HepG2 (cell line): ENCODE measurements at regions of chr2 and their contacts with region 1.

Region 1: GRCh38 chr2:231463698-231464575 is at the start of gene NCL:
- DNase-seq: peak; percentile 96
- ATAC-seq: peak; percentile 94
- H3K4me3 ChIP-seq: peak within 1 kb of the TSS; percentile 80 to 100 (median 87)
- H3K27ac ChIP-seq: peak within 1 kb of the TSS; percentile 99
- H3K4me1 ChIP-seq: peaks cover 61% of the 10 kb centered on the region
- H3K27me3 ChIP-seq: peaks cover 0 to 2% of the 10 kb centered on the region in 2 experiments; a peak in 3 of 5 replicates
- CTCF ChIP-seq: peak; percentile 35; the same call in 1 of the 2 replicates
- EP300 ChIP-seq: peak; percentile 18 to 53; a peak in 2 of 4 replicates
- POLR2A ChIP-seq: peak; percentile 100
- RAD21 ChIP-seq: peak; percentile 65
- total RNA-seq, gene NCL: 779 and 1,144 TPM in 2 replicates

Region 2: DNA sequence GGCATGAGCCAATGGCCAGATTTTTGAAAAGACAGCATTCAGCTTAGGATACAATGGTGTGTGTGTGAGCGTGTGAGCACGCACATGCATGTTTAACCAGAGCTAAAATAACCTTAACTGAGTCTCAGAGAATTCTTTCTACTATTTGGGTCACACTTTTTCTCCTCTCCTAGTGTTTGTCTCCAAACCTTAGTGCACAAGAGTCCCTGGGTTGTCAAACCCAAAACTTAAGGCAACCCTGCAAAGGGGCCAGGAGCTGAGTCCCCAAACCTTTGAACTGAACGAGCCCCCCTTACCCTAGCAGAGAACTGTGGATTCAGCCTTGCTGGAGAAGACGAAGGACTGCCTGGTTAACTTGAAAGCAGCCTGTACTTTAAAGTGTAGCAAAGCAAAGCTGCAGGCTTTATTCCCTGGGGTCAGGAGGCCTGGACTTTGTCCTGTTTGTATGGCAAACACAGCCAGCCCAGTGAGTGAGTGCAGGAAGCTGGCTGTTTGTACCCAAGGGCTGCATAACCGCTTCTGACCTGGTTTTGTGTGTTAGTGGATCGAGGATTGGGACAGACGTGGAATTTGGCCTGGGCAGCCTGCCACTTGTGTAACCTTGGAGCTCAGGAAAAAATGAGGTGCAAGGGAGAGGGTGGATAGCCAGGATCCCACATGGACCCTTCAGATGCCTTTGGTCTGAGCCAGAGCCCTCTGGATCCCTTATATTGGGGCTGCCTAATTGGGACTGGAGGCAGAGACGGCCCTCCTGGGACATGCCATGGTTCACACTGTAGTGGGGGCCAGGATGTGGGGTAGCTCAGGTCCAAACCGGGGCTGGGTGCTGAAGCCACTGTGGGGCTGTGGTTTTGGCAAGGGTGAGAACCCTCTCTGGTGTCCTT is 413.7 kb before region 1 on chr2:
- CTCF ChIA-PET with region 1: no interaction called
- POLR2A ChIA-PET with region 1: interaction called, 14 read pairs
- in situ Hi-C with region 1: no loop called
- intact Hi-C with region 1: loop called (anchors 5 kb)
- DNase-seq: peak; percentile 100
- ATAC-seq: peak; percentile 76
- H3K4me3 ChIP-seq: peak overlapping the region; percentile 40 to 82 (median 57)
- H3K27ac ChIP-seq: peak overlapping the region; percentile 97
- H3K4me1 ChIP-seq: peaks cover 82% of the 10 kb centered on the region
- H3K27me3 ChIP-seq: no peaks in the 10 kb centered on the region; a peak in 1 of 5 replicates
- CTCF ChIP-seq: peak; percentile 53
- EP300 ChIP-seq: peak; percentile 89 to 99
- POLR2A ChIP-seq: peak in 1 of 2 experiments; percentile 99; a peak in 2 of 4 replicates
- RAD21 ChIP-seq: peak; percentile 31; the same call in 1 of the 2 replicates

Region 3: DNA sequence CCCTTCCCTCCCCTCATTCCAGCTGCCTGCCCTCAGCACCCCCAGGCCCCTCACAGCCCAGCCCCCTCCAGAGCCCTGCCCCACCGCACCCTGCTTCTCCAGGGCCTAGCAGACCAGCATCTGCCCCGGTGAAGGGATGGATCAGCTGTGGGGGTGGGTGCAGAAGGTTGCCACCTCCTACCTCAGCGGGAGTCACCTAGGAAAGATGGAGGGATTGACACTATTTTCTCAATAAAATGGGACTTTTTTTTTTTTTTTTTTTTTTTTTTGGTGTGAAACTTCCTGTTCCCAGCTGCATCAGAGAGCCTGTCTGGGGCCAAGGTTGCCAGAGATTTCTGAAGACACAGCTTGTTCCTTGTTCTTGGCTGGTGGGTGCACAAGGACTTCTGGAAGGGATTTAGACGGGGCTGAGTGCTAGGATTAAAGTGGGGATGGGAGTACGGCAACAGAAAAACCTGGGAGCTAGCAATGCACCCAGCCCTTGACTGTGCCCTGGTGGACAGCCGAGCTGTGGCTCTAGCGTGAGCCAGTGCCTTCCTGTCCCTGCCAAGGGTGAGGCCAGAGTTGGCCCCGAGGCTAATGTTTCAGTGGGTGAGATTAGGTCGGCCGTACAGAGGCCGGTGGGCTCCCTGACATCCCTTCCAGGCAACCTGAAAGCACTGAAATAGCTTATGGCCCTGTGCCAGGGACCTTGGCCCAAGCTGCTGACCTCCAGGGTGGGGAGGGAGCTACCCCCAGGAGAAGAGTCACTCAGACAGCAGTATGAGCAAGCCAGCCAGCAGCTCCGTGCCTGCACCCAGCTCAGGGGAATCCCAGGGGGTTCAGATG is 63.9 kb before region 1 on chr2:
- CTCF ChIA-PET with region 1: no interaction called
- POLR2A ChIA-PET with region 1: interaction called, 11 read pairs
- in situ Hi-C with region 1: no loop called
- intact Hi-C with region 1: no loop called
- DNase-seq: peak; percentile 41
- ATAC-seq: peak; percentile 89
- H3K4me3 ChIP-seq: peak overlapping the region; percentile 7 to 62 (median 29); a peak in 5 of 6 replicates
- H3K27ac ChIP-seq: no peak overlapping the region
- H3K4me1 ChIP-seq: peaks cover 16% of the 10 kb centered on the region
- H3K27me3 ChIP-seq: peaks cover 4 to 74% of the 10 kb centered on the region in 2 experiments
- CTCF ChIP-seq: no peak
- EP300 ChIP-seq: no peak
- POLR2A ChIP-seq: no peak
- RAD21 ChIP-seq: no peak

Region 4: DNA sequence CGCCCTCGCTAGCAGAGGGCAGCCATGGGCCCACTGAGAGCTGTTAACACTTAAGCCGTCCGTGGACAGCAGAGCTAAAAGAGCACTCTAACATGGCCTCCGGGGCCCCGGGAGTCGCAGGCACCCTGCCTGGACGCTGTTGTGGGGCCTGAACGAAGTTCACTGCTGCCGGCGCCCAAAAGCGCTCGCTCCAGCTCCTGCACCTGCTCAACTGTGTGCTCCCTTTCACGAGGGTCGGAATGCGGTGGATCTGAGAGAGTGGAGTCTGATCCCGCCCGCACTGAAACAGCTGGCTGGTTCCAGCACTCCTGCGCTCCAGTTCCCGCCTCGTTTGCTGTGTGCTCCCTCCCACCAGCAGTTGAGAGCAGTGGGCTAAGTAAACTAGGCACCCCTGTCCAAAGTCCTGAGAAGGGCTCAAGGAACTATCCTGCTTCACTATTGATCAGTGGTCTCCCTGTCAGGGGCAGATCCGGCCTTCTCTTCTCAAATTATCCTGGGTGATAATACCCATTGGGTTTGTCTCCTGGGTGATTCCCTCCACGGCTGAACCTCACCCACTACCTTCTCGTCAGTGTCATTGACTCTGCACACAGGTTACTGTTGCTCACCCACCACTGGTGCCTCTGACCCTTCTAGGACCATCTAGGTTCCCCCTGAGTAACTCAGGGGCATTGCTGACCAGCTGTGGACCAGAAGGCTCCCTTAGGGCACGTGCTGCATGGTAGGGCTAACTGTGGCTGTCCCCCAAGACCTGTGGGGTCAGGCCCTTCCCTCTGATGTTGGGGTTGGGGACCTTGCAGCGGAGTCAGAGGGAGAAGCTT is 44.9 kb before region 1 on chr2:
- CTCF ChIA-PET with region 1: no interaction called
- POLR2A ChIA-PET with region 1: interaction called, 21 read pairs
- in situ Hi-C with region 1: no loop called
- intact Hi-C with region 1: no loop called
- DNase-seq: peak; percentile 39
- ATAC-seq: peak; percentile 83
- H3K4me3 ChIP-seq: peak overlapping the region; percentile 17 to 56 (median 21); a peak in 5 of 6 replicates
- H3K27ac ChIP-seq: peak overlapping the region; percentile 2
- H3K4me1 ChIP-seq: peaks cover 41% of the 10 kb centered on the region
- H3K27me3 ChIP-seq: no peaks in the 10 kb centered on the region; a peak in 2 of 5 replicates
- CTCF ChIP-seq: 0 out of 2 replicates have a peak, but pooled peaks have one; percentile 9
- EP300 ChIP-seq: no peak
- POLR2A ChIP-seq: no peak
- RAD21 ChIP-seq: no peak

Region 5: DNA sequence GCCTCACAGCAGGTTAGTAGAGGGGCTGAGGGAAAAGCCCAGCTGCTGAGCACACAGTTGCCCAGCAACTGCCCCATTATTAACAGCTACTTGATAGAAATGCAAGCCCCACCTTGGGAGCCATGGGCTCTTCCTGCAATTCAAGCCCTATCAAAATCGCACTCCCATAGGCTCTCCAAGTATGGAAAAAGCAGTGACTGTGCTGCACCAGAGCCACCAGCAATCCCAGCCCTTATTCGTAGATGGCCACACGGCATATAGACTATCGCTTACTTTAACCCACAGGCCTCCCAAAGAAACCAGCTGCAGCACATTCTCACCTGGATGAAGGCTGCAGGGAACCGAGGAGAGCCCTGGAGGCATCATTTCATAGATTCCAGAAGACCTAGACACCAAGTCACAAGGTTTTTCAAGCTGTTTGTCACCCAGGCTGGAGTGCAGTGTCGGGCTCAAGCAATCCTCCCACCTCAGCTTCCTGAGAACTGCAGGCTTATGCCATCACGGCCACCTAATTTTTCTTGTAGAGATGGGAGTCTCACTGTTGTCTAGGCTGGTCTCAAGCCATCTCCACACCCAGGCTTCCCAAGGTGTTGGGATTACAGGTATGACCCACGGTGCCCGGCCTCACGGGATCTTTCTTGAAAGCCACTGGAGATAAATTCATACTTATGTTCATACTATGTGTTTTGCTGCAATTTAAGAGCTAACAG is 11.0 kb before region 1 on chr2:
- CTCF ChIA-PET with region 1: no interaction called
- POLR2A ChIA-PET with region 1: interaction called, 155 read pairs
- in situ Hi-C with region 1: no loop called
- intact Hi-C with region 1: no loop called
- DNase-seq: peak; percentile 23
- ATAC-seq: peak; percentile 7
- H3K4me3 ChIP-seq: no peak overlapping the region
- H3K27ac ChIP-seq: peak overlapping the region; percentile 11
- H3K4me1 ChIP-seq: peaks cover 10% of the 10 kb centered on the region
- H3K27me3 ChIP-seq: no peaks in the 10 kb centered on the region
- CTCF ChIP-seq: no peak
- EP300 ChIP-seq: no peak; a peak in 1 of 4 replicates
- POLR2A ChIP-seq: peak; percentile 47 to 77
- RAD21 ChIP-seq: no peak

Region 6: DNA sequence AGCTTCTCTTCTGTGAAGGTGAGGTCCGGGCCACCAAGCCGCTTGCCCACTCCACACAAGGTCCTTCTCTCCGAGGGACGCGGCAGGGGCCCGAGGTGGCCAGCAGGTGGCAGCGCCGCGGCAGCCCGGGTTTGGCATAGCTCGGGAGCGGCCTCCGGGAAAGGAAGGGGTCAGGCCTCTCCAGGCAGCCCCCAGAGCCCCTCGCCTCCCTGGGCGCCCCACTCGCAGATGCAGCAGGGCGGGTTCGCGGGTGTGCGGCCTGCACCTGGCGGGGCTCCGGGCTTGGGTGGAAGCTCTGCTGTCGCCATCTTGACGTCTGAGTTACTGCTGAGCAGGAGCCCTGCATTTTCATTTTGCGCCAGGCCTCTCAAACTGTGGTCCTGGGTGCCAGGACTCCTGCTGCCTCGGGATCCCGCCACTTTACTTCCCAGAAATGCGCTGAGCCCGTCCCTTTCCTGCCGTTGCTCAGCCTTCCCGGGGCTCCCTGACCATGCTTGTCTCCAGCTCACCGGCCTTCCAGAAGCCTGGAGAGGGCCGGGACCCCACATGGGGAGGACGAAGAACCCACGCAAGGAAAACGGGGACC is 19.0 kb after region 1 on chr2:
- CTCF ChIA-PET with region 1: no interaction called
- POLR2A ChIA-PET with region 1: interaction called, 40 read pairs
- in situ Hi-C with region 1: no loop called
- intact Hi-C with region 1: no loop called
- DNase-seq: peak; percentile 65
- ATAC-seq: peak; percentile 98
- H3K4me3 ChIP-seq: peak overlapping the region; percentile 34 to 71 (median 70); a peak in 5 of 6 replicates
- H3K27ac ChIP-seq: no peak overlapping the region
- H3K4me1 ChIP-seq: peaks cover 7% of the 10 kb centered on the region
- H3K27me3 ChIP-seq: peaks cover 3 to 28% of the 10 kb centered on the region in 2 experiments; a peak in 2 of 5 replicates
- CTCF ChIP-seq: peak; percentile 97
- EP300 ChIP-seq: no peak
- POLR2A ChIP-seq: no peak
- RAD21 ChIP-seq: peak; percentile 82